Activated T-helper 2 cell treated with anti-CD3 and anti-CD28 coated beads, Interferon-gamma antibody, Interleukin-2, Interleukin-4, amounts not matched to agents 10 μg/mL and 5 μg/mL and 100 μg/mL, durations not matched to agents 14 hours and 24 hours and 36 hours (primary cell): ENCODE measurements at regions of chr4 and their contacts with region 1.

Region 1: GRCh38 chr4:153153339-153153871 is 50.8 kb upstream of the TRIM2 start:
- DNase-seq: peak; percentile 66
- H3K4me3 Mint-ChIP-seq: peak overlapping the region; percentile 75
- H3K27ac Mint-ChIP-seq: peak overlapping the region; percentile 48
- H3K4me1 Mint-ChIP-seq: peaks cover 38% of the 10 kb centered on the region
- H3K27me3 Mint-ChIP-seq: peaks cover 51% of the 10 kb centered on the region

Region 2: GRCh38 chr4:152709683-152710438 is 443.5 kb before region 1 on chr4:
- intact Hi-C with region 1: no loop called
- DNase-seq: no peak
- H3K4me3 Mint-ChIP-seq: no peak overlapping the region
- H3K27ac Mint-ChIP-seq: no peak overlapping the region
- H3K4me1 Mint-ChIP-seq: peaks cover 3% of the 10 kb centered on the region
- H3K27me3 Mint-ChIP-seq: peaks cover 10% of the 10 kb centered on the region

Region 3: DNA sequence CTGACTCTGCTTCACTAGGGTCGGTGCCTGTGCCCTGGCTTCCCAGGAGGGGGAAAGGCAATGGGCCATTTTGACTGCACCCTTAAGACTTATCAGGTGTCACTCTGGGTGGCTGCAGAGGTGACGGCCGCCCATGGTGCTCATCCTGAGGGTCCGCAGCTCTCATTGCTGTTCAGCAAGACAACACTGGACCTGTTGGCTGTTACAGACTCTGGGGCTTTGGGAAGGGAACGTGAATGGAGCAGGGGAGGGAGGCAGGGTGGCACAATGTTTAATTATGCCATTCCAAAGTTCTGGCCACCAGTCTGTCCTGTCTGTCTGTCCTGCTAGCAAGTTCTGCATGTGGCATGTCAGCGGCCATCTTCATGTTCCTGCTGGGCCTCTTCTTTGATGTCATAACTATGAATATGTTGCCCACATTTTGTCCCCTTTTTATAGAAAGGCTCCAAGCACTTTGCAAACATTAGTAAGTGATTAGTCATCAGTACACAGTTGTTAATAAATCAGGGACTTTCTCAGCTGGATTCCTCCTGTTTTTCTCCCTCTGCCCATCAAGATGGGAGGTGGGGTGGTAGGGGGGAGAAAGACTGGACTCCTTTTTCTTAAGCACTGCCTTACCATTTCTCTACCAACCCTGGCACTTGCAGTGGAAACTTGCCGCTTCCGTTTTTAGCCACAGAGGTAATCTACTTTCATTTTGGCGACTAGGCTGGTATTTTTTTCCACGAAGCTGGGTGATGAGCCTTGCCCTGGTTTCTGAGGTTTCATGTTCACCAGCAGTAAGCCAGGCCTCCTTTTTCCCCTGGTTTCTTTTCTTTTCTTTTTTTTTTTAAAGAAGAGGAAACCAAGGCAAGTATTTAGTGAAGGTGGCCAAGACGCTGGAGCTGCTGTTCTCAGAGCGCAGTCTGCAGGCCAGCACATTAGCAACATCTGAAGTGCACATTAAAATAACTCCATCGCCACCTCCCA is 37.8 kb before region 1 on chr4:
- intact Hi-C with region 1: loop called (anchors 2 kb)
- DNase-seq: peak; percentile 72
- H3K4me3 Mint-ChIP-seq: peak overlapping the region; percentile 40
- H3K27ac Mint-ChIP-seq: no peak overlapping the region
- H3K4me1 Mint-ChIP-seq: peaks cover 14% of the 10 kb centered on the region
- H3K27me3 Mint-ChIP-seq: peaks cover 19% of the 10 kb centered on the region

Region 4: GRCh38 chr4:153204247-153205027 is 51.0 kb after region 1 on chr4 and contains the start of gene TRIM2:
- intact Hi-C with region 1: loop called (anchors 5 kb)
- DNase-seq: no peak
- H3K4me3 Mint-ChIP-seq: peak within 1 kb of the TSS; percentile 35
- H3K27ac Mint-ChIP-seq: no peak within 1 kb of the TSS
- H3K4me1 Mint-ChIP-seq: peaks cover 21% of the 10 kb centered on the region
- H3K27me3 Mint-ChIP-seq: peaks cover 4% of the 10 kb centered on the region
- total RNA-seq, gene TRIM2: 0.09 and 0.18 TPM in 2 replicates

Region 5: GRCh38 chr4:153221783-153222706 is 68.6 kb after region 1 on chr4:
- intact Hi-C with region 1: loop called (anchors 5 kb)
- DNase-seq: no peak
- H3K4me3 Mint-ChIP-seq: peak overlapping the region; percentile 65
- H3K27ac Mint-ChIP-seq: no peak overlapping the region
- H3K4me1 Mint-ChIP-seq: peaks cover 9% of the 10 kb centered on the region
- H3K27me3 Mint-ChIP-seq: peaks cover 81% of the 10 kb centered on the region

Region 6: GRCh38 chr4:153750197-153750817 is 596.9 kb after region 1 on chr4:
- intact Hi-C with region 1: loop called (anchors 10 kb)
- DNase-seq: peak; percentile 51
- H3K4me3 Mint-ChIP-seq: no peak overlapping the region
- H3K27ac Mint-ChIP-seq: no peak overlapping the region
- H3K4me1 Mint-ChIP-seq: peaks cover 3% of the 10 kb centered on the region
- H3K27me3 Mint-ChIP-seq: peaks cover 43% of the 10 kb centered on the region